WTC11 (cell line): ENCODE measurements at regions of chr12 and their contacts with region 1.

Region 1: GRCh38 chr12:53508534-53509199 is 1.4 kb upstream of the NPFF start:
- DNase-seq: peak; percentile 94
- ATAC-seq: peak; percentile 93
- H3K4me3 Mint-ChIP-seq: no peak overlapping the region
- H3K27ac Mint-ChIP-seq: no peak overlapping the region
- H3K4me1 Mint-ChIP-seq: peaks cover 4% of the 10 kb centered on the region; the same call in 1 of the 2 replicates
- H3K27me3 Mint-ChIP-seq: no peaks in the 10 kb centered on the region
- CTCF ChIP-seq: peak; percentile 83

Region 2: GRCh38 chr12:53391729-53392128 is 116.9 kb before region 1 on chr12:
- CTCF ChIA-PET with region 1: no interaction called
- POLR2A ChIA-PET with region 1: no interaction called
- DNase-seq: no peak
- ATAC-seq: no peak
- H3K4me3 Mint-ChIP-seq: no peak overlapping the region
- H3K27ac Mint-ChIP-seq: peak overlapping the region; percentile 49; the same call in 1 of the 2 replicates
- H3K4me1 Mint-ChIP-seq: peaks cover 12% of the 10 kb centered on the region
- H3K27me3 Mint-ChIP-seq: no peaks in the 10 kb centered on the region
- CTCF ChIP-seq: no peak

Region 3: DNA sequence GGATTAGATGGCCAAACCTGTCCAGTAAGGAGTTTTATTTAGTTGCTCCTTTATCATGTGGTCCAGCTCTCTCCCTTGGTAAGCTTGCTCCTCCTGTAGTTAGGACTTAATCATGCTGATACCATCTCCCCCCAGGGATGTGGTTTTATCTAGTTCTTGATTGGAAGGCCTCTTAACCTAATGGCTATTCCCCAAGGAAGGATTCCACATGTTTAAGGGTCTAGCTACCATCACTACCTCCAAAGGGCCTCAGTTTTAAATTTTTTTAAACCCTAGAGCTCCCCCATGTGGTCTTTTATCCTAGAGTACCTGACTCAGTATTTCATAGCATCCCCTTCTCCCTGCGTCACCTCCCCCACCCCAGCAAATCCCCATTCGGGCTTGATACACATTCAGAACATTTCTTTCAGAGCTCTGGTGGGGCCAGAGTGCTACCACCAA is 31.9 kb before region 1 on chr12:
- CTCF ChIA-PET with region 1: interaction called, 99 read pairs
- POLR2A ChIA-PET with region 1: interaction called, 4 read pairs
- DNase-seq: no peak
- ATAC-seq: peak; percentile 69
- H3K4me3 Mint-ChIP-seq: no peak overlapping the region
- H3K27ac Mint-ChIP-seq: peak overlapping the region; percentile 89
- H3K4me1 Mint-ChIP-seq: peaks cover 43% of the 10 kb centered on the region
- H3K27me3 Mint-ChIP-seq: no peaks in the 10 kb centered on the region
- CTCF ChIP-seq: peak; percentile 27; the same call in 1 of the 2 replicates